Right ventricle myocardium inferior (tissue), 1 donor: ENCODE measurements at regions of chr10 and their contacts with region 1.

Region 1: DNA sequence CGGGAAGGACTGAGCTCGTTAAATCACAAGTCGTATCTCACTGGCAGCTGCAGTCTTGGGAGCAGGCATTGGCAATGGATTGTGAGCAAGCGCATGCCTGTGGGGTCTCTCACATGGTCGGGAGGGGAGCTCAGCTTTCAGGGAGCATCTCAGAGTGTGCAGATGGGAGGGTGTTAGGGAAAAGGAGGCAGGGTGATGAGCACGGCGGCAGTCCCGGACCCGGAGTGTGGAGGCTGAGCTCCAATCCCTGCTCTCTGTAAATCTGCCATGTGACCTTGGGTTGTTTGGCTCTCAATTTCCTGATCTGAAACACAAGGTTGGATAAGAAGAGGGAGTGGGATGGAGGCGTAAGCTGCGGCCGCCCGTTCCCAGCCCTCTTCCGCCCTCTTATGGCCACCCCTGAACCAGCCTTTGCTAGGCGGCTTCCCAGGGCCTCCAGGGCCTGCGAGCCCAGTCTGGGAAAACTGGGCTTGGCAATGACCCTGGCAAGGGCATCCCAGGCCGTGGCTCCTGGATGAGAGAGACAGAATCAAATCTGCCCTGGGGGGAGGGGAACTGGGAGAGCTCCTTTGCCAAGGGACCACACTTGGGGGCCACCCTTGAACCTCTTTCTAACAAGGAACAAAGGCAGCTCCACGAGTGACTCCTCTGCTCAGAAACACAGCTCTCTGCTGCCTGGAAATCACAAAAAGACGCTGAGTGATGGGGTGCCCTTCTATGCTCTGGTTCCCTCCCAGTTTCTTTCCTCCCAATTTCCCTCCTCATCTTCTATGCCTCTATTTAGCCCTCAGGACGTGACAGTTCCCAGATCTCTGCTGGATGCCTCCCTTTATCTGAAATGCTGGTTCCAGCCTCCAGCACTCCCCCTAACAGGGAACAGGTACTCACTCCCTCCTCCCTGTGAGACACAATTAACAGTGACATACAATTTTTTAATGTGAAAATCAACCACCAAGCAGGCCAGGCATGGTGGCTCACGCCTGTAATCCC is 41.7 kb upstream of the LOXL4 start:
- DNase-seq: peak; percentile 81
- ATAC-seq: peak; percentile 97

Region 2: DNA sequence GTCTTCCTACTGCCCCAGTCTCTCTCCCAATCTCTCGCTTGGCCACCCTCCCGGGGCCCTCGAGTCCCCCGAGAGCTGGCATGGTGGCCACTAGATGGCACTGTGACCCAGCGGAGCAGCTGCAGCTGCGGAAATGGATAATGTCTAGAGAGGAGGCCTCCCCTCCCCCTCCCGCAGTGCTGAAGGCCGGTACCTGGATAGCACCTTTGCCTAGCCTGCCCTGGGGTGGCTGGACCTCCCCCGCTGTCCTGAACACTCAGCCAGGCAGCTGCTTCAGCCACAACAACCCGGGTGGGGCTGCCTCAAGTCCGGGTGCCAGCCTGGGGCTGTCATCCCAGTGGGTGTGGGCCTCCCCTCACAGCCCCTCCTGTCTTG is 394.8 kb before region 1 on chr10:
- intact Hi-C with region 1: loop called (anchors 2 kb)
- DNase-seq: peak; percentile 83
- ATAC-seq: peak; percentile 74

Region 3: GRCh38 chr10:98168147-98168546 is 141.5 kb before region 1 on chr10:
- intact Hi-C with region 1: loop called (anchors 5 kb)
- DNase-seq: no peak
- ATAC-seq: no peak

Region 4: DNA sequence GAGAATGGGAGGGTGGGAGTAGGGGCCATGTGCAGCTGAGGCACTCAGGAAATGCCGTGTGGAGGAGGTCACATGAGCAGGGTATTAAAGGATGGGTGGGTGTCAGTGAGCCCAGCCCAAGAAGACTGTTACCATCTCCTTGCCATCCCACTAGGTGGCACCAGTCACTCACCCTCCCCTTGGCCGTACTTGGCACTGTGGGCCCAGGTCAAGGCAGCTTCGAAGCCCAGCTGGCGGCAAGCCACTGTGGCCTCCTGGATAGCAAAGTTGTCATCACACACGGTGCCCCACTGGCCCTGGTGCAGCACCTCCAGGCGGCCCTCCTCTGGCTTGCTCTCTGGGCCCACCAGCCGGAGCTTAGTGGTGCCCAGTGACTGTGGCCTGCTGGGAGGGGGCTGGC is 47.1 kb before region 1 on chr10:
- intact Hi-C with region 1: loop called (anchors 1 kb)
- DNase-seq: no peak
- ATAC-seq: peak; percentile 72

Region 5: GRCh38 chr10:99248824-99249223 is 939.2 kb after region 1 on chr10:
- intact Hi-C with region 1: no loop called
- DNase-seq: no peak
- ATAC-seq: no peak